H1 (cell line): ENCODE measurements at regions of chr10 and their contacts with region 1.

Region 1: DNA sequence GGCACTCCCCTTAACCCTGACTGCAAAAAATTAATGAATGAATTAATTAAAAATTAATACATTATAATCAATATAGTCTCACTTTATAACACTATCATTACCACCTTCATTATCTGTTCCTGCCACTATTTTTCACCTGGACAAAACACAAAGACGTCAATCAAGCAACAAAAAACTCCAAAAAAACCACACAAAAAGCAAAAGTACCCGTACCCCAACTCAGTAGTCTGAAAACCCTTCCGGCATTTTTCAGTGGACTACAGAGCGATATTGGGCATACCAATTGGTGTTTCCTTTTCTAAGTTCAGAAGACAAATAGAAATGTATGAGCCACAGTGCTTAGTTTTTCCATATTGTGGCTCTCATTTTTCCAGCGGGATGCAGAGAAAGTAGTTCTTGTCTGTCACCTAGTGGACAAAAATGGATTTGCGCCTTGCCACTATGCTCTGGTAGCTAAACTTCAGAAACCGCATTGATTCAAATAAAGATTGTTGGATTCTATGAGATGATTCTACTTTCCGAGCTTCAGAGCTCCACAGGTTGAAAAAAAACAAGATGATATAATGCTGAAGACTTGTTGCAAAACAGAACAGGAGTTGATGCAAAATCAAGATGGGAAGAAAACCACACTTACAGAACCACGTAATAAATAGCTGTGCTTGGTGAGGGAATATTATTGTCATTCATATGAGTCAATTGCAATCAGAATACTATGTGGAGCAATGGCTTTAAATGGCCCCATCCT is 50.6 kb upstream of the ITGB1 start:
- DNase-seq: peak in 1 of 2 experiments; percentile 72
- H3K4me3 ChIP-seq: peak overlapping the region in 1 of 4 experiments; percentile 20; a peak in 1 of 8 replicates
- H3K27ac ChIP-seq: no peak overlapping the region
- H3K4me1 ChIP-seq: peaks cover 6 to 12% (median 9%) of the 10 kb centered on the region in 4 experiments; a peak in 6 of 7 replicates
- H3K27me3 ChIP-seq: no peaks in the 10 kb centered on the region
- CTCF ChIP-seq: peak in 2 of 3 experiments; percentile 80 to 89; a peak in 3 of 4 replicates
- EP300 ChIP-seq: no peak
- POLR2A ChIP-seq: no peak
- RAD21 ChIP-seq: peak; percentile 96 to 98

Region 2: GRCh38 chr10:32795598-32796183 is 213.0 kb before region 1 on chr10:
- CTCF ChIA-PET with region 1: interaction called, 10 read pairs
- POLR2A ChIA-PET with region 1: no interaction called
- DNase-seq: no peak
- H3K4me3 ChIP-seq: no peak overlapping the region
- H3K27ac ChIP-seq: no peak overlapping the region
- H3K4me1 ChIP-seq: no peaks in the 10 kb centered on the region
- H3K27me3 ChIP-seq: no peaks in the 10 kb centered on the region
- CTCF ChIP-seq: peak in 2 of 3 experiments; percentile 51 to 64; a peak in 3 of 4 replicates
- EP300 ChIP-seq: no peak
- POLR2A ChIP-seq: no peak
- RAD21 ChIP-seq: peak; percentile 93 to 95

Region 3: DNA sequence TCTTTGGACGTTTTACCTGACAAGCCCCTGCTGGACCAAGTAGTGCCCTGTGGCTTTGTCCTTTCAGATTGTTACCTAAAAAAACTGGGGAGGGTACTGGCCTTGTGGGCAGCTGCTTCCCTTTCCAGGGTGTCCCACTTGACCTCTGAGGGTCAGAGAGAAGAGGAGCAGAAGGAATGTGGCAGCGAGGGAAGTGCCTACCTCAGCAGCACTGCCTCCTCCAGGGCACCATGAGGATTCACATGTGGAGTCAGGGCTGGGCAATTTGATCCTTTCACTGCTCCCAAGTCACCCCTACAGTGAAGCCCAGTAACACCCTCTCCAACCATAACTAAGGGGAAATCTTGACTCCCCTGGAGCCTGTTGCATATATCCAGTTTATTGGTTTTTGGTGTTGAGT is 115.2 kb before region 1 on chr10:
- CTCF ChIA-PET with region 1: interaction called, 11 read pairs
- POLR2A ChIA-PET with region 1: no interaction called
- DNase-seq: peak; percentile 53 to 68
- H3K4me3 ChIP-seq: no peak overlapping the region
- H3K27ac ChIP-seq: no peak overlapping the region
- H3K4me1 ChIP-seq: peaks cover 0 to 7% (median 2%) of the 10 kb centered on the region in 4 experiments; a peak in 1 of 7 replicates
- H3K27me3 ChIP-seq: no peaks in the 10 kb centered on the region
- CTCF ChIP-seq: peak; percentile 50 to 87 (median 83)
- EP300 ChIP-seq: no peak
- POLR2A ChIP-seq: no peak
- RAD21 ChIP-seq: peak; percentile 53 to 60

Region 4: DNA sequence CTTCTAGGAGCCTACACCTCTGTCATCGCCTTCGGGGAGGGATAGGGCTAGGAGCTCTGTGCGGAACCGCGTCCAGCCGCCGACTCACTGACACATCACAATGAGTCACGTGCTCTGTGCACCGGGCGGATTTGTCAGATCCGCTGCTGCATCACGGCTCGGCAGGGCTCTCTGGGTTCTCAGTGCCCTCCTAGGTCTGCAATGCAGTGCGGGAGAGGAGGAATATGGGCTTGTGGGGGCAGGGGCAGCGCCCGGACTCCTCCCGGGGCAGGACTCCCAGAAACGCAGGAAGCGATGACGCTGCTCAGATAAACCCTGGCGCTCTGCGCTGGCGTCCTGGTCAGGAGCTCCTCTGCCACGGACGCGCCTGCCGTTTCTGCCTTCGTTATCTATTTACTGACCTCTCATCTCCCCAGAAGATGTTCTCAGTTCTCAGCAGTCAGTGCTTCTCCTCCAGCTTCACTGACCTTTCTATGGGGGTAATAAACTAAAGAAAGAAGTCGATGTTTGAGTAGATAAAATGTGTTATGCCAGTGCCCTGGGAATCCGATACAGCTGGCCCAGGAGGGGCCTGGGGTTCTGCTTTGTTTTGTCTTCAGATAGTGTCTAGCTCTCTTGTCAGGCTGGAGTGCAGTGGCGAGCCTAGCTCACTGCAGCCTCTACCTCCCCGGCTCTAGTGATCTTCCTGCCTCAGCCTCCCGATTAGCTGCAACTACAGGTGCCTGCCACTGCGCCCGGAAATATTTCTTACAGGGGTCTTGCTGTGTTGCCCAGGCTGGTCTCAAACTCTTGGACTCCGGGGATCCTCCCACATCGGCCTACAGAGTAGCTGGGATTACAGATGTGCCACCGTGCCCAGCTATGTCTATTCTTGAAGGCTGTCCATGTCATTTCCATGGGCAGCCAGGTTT is 27.9 kb before region 1 on chr10:
- CTCF ChIA-PET with region 1: interaction called, 11 read pairs
- POLR2A ChIA-PET with region 1: no interaction called
- DNase-seq: peak; percentile 85 to 88
- H3K4me3 ChIP-seq: peak overlapping the region; percentile 36 to 62 (median 59); a peak in 7 of 8 replicates
- H3K27ac ChIP-seq: peak overlapping the region; percentile 34; the same call in 1 of the 2 replicates
- H3K4me1 ChIP-seq: peaks cover 0 to 9% (median 2%) of the 10 kb centered on the region in 4 experiments; a peak in 4 of 7 replicates
- H3K27me3 ChIP-seq: no peaks in the 10 kb centered on the region
- CTCF ChIP-seq: no peak
- EP300 ChIP-seq: no peak
- POLR2A ChIP-seq: peak in 1 of 2 experiments; percentile 80; a peak in 2 of 3 replicates
- RAD21 ChIP-seq: no peak

Region 5: GRCh38 chr10:33066558-33067236 is 58.0 kb after region 1 on chr10:
- CTCF ChIA-PET with region 1: interaction called, 19 read pairs
- POLR2A ChIA-PET with region 1: no interaction called
- DNase-seq: no peak
- H3K4me3 ChIP-seq: no peak overlapping the region
- H3K27ac ChIP-seq: no peak overlapping the region
- H3K4me1 ChIP-seq: no peaks in the 10 kb centered on the region
- H3K27me3 ChIP-seq: no peaks in the 10 kb centered on the region
- CTCF ChIP-seq: peak in 2 of 3 experiments; percentile 48 to 66; a peak in 3 of 4 replicates
- EP300 ChIP-seq: no peak
- POLR2A ChIP-seq: no peak
- RAD21 ChIP-seq: peak; percentile 32 to 61; a peak in 3 of 4 replicates

Region 6: GRCh38 chr10:33098951-33099663 is 90.4 kb after region 1 on chr10:
- CTCF ChIA-PET with region 1: interaction called, 47 read pairs
- POLR2A ChIA-PET with region 1: no interaction called
- DNase-seq: no peak
- H3K4me3 ChIP-seq: no peak overlapping the region
- H3K27ac ChIP-seq: no peak overlapping the region
- H3K4me1 ChIP-seq: peaks cover 0 to 3% (median 0%) of the 10 kb centered on the region in 4 experiments; a peak in 1 of 7 replicates
- H3K27me3 ChIP-seq: no peaks in the 10 kb centered on the region
- CTCF ChIP-seq: no peak
- EP300 ChIP-seq: no peak
- POLR2A ChIP-seq: no peak
- RAD21 ChIP-seq: no peak

Region 7: GRCh38 chr10:33134011-33134751 is 125.5 kb after region 1 on chr10:
- CTCF ChIA-PET with region 1: interaction called, 13 read pairs
- POLR2A ChIA-PET with region 1: no interaction called
- DNase-seq: no peak
- H3K4me3 ChIP-seq: no peak overlapping the region
- H3K27ac ChIP-seq: no peak overlapping the region
- H3K4me1 ChIP-seq: no peaks in the 10 kb centered on the region; a peak in 1 of 7 replicates
- H3K27me3 ChIP-seq: no peaks in the 10 kb centered on the region
- CTCF ChIP-seq: no peak
- EP300 ChIP-seq: no peak
- POLR2A ChIP-seq: no peak
- RAD21 ChIP-seq: no peak